Right cardiac atrium (tissue), 5 donors: ENCODE measurements at regions of chr13 and their contacts with region 1.

Region 1: DNA sequence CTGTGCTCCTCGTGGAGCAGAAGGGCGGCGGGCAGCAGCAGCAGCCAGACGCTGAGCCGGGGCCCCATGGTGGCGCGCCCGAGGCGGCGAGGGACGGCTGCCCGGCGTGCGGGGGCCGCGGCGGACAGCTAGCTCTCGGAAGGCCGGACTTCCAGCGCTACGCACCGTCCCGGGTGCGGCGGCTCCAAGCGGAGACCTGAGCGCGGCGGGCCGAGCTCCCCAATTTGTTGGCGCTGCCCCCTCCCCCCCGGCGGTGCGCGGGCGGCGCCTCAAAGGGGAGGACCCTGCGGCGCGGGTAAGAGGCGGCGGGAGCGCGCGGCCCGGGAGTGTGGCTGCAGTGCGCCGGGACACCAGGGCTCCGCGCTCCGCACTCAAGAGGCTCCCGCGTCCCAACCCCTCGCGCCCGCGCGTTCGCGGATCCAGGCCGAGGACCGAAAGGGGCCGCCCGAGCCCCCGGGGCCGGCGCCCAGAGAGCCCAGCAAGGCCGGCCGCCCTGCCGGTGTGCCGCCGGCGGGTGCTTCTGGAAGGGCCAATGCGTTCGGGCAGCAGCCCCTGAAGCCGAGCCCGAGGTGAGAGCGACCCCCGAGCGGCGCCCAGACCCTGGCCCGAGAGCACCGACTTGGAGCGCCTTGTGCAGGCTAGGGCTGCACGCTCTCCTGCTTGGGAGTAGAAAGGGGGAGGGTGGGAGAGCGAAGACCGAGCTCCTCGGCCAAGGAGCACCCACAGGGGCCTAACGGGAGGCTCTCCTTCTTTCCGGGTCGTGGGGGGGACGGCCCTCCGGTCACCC is at the starts of genes COL4A1 and COL4A2:
- DNase-seq: peak; percentile 85 to 94 (median 93)
- ATAC-seq: peak; percentile 87 to 90
- H3K4me3 ChIP-seq: peak within 1 kb of the TSS; percentile 78
- H3K27ac ChIP-seq: peak within 1 kb of the TSS; percentile 71
- H3K4me1 ChIP-seq: peaks cover 33% of the 10 kb centered on the region
- H3K27me3 ChIP-seq: no peaks in the 10 kb centered on the region
- total RNA-seq, gene COL4A1: 91.9 to 267 (median 118) TPM
- total RNA-seq, gene COL4A2: 84.7 to 268 (median 123) TPM

Region 2: DNA sequence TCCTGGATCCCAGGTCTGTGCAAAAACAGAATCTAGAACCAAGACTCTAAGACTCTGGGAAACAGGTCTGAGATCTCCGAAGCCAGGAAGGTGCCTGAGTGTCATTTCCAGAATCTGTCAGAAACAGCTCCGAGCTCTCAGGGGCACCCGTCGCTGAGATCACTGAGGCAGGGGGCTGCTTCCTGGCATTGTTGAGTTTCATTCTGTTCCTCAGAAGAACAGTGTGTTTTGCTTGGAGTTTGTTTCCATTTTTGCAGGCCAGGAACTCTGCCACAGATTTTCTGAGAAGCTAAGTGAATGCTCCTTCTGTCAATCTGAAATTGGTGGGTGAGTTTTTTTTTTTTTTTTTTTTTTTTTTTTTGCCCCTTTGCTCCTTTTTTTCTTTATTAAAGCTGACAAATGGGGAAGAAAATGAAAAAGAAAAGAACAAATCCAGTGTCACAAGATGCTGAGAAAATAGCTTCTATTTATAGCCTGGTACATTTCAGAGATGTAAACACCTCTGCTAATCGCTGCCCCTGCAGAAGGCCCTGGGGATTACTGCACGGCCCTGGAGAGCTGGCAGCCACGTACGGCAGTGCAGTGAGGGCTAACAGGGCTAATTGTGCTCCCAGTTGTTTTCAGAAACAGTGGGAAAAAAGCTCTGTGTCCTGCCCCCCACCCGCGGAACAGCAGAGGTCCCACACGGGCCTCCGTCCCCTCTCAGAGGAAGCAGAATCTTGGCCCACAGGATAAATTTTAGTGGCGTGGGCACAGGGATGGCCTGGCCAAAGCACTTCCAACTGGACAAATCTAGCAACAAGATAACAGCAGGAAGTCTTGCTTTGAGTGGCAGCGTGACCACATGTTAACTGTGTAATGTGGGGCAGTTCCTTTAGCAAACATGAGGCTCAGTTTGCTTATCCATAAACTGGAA is 283.2 kb before region 1 on chr13:
- intact Hi-C with region 1: no loop called
- DNase-seq: peak; percentile 24 to 80 (median 75)
- ATAC-seq: peak; percentile 90 to 94
- H3K4me3 ChIP-seq: no peak overlapping the region
- H3K27ac ChIP-seq: peak overlapping the region; percentile 57
- H3K4me1 ChIP-seq: peaks cover 5% of the 10 kb centered on the region
- H3K27me3 ChIP-seq: no peaks in the 10 kb centered on the region

Region 3: DNA sequence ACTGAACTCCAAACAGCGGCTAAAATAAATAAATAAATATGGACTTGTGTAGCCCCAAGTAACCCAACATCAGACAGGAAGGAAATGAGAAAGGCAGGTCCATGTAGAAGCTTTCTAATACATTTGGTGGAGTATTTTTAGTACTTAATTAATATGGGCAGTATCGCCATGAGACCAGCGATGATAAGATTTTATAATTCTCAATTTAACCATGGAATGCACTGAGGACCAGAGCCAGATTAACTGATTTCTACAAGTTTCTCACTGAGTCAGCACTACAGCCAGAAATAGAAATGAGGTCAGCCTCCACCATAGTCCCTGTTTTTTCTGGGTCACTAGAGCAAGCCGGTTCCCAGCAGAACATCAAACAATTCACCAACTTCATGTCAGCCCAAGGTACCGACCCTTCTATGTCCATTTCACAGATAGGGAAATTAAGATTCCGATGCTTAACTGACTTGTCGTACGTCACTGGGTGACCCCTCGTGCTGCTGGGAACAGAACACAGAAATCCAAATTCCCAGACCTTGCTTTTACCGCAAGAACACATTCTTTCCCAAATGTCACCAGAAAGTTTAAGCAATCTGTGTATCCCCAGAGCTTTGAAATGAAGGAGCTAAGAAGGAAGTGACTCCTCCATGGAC is 90.6 kb before region 1 on chr13:
- intact Hi-C with region 1: loop called in 1 of 4 experiments (anchors 5 kb)
- DNase-seq: peak in 1 of 3 donors; percentile 64
- ATAC-seq: peak; percentile 71 to 81
- H3K4me3 ChIP-seq: no peak overlapping the region
- H3K27ac ChIP-seq: peak overlapping the region; percentile 73
- H3K4me1 ChIP-seq: peaks cover 23% of the 10 kb centered on the region
- H3K27me3 ChIP-seq: no peaks in the 10 kb centered on the region

Region 4: GRCh38 chr13:110225609-110226562 is 81.3 kb before region 1 on chr13:
- intact Hi-C with region 1: loop called in 3 of 4 experiments (anchors 5 kb)
- DNase-seq: no peak
- ATAC-seq: no peak
- H3K4me3 ChIP-seq: no peak overlapping the region
- H3K27ac ChIP-seq: peak overlapping the region; percentile 53
- H3K4me1 ChIP-seq: peaks cover 2% of the 10 kb centered on the region
- H3K27me3 ChIP-seq: no peaks in the 10 kb centered on the region

Region 5: GRCh38 chr13:110233181-110233950 is 73.8 kb before region 1 on chr13:
- intact Hi-C with region 1: loop called in 2 of 4 experiments (anchors 5 kb)
- DNase-seq: peak; percentile 70 to 87 (median 78)
- ATAC-seq: peak; percentile 67 to 69
- H3K4me3 ChIP-seq: peak overlapping the region; percentile 2
- H3K27ac ChIP-seq: peak overlapping the region; percentile 68
- H3K4me1 ChIP-seq: peaks cover 30% of the 10 kb centered on the region
- H3K27me3 ChIP-seq: no peaks in the 10 kb centered on the region

Region 6: GRCh38 chr13:110244071-110244830 is 62.9 kb before region 1 on chr13:
- intact Hi-C with region 1: loop called in 1 of 4 experiments (anchors 10 kb)
- DNase-seq: peak in 1 of 3 donors; percentile 43
- ATAC-seq: no peak
- H3K4me3 ChIP-seq: no peak overlapping the region
- H3K27ac ChIP-seq: peak overlapping the region; percentile 54
- H3K4me1 ChIP-seq: peaks cover 20% of the 10 kb centered on the region
- H3K27me3 ChIP-seq: no peaks in the 10 kb centered on the region

Region 7: DNA sequence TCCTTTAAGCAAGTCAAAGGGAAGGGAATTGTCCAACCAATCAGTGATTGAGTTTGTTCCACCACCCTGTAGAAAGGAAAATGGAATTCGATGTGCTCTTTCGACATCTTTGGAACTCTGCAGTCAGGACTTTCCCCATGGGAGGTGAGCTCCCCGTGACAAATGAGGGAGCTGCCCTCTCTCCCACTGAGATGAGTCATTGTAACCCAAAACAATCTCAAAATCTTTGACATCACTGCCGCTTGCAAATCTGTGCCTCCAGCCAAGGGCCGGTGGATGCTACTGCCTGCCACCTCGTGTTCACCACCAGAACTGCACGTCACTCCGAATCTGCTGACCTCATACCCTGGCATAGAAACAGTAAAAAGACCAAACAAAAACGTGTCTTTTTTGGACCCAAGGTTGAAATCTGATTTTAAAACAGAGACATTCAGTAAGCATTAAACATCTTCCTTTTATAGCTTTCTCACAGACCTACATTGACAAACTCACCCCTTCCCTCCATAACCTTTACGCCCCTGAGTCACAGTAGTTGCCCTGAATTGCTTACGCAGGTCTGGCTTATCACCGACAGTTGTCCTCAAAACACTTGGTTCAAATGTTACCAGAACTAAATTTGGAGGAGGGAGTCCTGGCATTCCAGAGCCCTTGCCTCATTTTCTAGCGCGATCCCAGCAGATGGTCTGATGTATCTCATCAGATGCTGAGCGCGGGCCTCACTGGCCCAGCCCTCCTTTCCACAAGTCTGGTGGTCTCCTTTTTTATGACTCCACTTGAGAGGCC is 105.2 kb after region 1 on chr13:
- intact Hi-C with region 1: loop called (anchors 5 to 10 kb)
- DNase-seq: peak; percentile 86 to 94 (median 93)
- ATAC-seq: peak; percentile 86
- H3K4me3 ChIP-seq: no peak overlapping the region
- H3K27ac ChIP-seq: peak overlapping the region; percentile 98
- H3K4me1 ChIP-seq: peaks cover 45% of the 10 kb centered on the region
- H3K27me3 ChIP-seq: no peaks in the 10 kb centered on the region

Region 8: DNA sequence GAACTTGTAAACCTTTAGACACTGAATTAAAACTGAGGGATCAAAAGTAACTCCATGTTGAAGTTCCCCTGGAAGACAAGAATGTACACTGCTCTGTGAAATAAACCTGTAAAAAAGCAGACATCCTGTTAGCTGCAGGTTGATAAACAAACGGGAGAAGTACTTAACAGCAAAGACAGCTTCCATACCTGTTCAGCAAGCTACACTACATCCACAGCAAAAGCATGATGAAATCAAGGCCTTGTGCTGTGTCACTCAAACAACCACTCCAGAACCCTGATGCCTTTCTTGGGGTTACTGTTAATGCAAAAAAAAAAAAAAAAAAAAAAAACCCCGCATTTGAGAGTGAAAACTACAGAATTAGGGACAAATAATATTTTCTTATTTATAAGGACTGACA is 586.9 kb after region 1 on chr13:
- intact Hi-C with region 1: no loop called
- DNase-seq: no peak
- ATAC-seq: no peak
- H3K4me3 ChIP-seq: no peak overlapping the region
- H3K27ac ChIP-seq: no peak overlapping the region
- H3K4me1 ChIP-seq: no peaks in the 10 kb centered on the region
- H3K27me3 ChIP-seq: no peaks in the 10 kb centered on the region